PC-9 (cell line): ENCODE measurements at regions of chr14 and their contacts with region 1.

Region 1: DNA sequence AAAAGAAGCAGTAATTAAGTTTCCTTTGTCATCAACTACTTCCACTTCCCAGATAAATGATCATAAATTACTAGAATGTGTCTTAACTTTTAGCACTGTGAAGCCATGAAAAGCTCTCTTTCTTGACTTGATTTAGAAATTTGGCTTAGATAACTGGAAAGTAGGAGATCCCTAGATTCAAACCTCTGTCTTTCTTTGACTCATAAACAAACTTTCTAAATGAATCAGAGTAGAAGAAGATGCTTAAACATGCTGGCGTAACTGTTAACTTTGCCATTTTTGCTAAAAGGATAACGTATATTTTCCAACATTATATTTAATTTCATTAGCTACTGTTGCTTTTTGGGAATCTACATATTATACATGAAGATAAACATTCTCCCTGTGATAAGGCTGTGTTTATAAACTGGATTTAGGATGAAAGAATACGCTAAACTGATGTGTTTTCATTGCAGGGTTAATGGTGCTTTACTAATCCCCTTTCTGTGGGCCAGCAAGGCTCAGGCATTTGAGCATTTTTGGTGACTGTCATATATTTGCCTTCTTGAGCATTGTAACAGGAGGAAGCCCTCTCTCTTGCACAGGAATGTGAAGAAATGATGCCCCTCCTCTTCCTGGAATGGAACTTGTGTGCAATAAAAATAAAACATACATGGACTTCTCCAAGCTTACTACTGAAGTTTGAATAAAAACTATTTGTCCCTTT is 301.4 kb downstream of the BMP4 start:
- DNase-seq: no peak
- H3K4me3 ChIP-seq: no peak overlapping the region
- H3K27ac ChIP-seq: no peak overlapping the region
- H3K4me1 ChIP-seq: no peaks in the 10 kb centered on the region
- H3K27me3 ChIP-seq: no peaks in the 10 kb centered on the region
- CTCF ChIP-seq: no peak

Region 2: GRCh38 chr14:53613404-53614253 is 41.6 kb before region 1 on chr14:
- CTCF ChIA-PET with region 1: no interaction called
- POLR2A ChIA-PET with region 1: interaction called, 44 read pairs
- intact Hi-C with region 1: no loop called
- DNase-seq: peak; percentile 31 to 84
- H3K4me3 ChIP-seq: peak overlapping the region; percentile 42; the same call in 1 of the 2 replicates
- H3K27ac ChIP-seq: peak overlapping the region; percentile 51
- H3K4me1 ChIP-seq: peaks cover 22% of the 10 kb centered on the region
- H3K27me3 ChIP-seq: no peaks in the 10 kb centered on the region
- CTCF ChIP-seq: no peak

Region 3: DNA sequence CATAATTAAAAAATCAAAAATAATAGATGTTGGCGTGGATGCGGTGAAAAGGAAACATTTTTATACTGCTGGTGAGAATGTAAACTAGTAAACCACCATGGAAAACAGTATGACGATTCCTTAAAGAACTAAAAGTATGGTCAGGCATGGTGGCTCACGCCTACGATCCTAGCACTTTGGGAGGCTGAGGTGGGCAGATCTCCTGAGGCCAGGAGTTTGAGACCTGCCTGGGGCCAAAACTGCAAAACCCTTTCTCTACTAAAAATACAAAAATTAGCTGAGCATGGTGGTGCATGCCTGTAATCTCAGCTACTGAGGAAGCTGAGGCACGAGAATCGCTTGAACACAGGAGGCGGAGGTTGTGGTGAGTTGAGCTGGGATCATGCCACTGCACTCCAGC is 497.1 kb after region 1 on chr14:
- CTCF ChIA-PET with region 1: no interaction called
- POLR2A ChIA-PET with region 1: interaction called, 13 read pairs
- intact Hi-C with region 1: no loop called
- DNase-seq: no peak
- H3K4me3 ChIP-seq: no peak overlapping the region
- H3K27ac ChIP-seq: no peak overlapping the region
- H3K4me1 ChIP-seq: no peaks in the 10 kb centered on the region
- H3K27me3 ChIP-seq: no peaks in the 10 kb centered on the region
- CTCF ChIP-seq: no peak